ENCODE measurements at regions of chr2 and their contacts with region 1.

Region 1: GRCh38 chr2:43995733-43996533 is at the start of gene LRPPRC:
- DNase-seq: peak; percentile 96
- H3K4me3 Mint-ChIP-seq: peak within 1 kb of the TSS; percentile 96
- H3K27ac Mint-ChIP-seq: peak within 1 kb of the TSS; percentile 95
- H3K4me1 Mint-ChIP-seq: peaks cover 32% of the 10 kb centered on the region
- H3K27me3 Mint-ChIP-seq: peaks cover 5% of the 10 kb centered on the region
- total RNA-seq, gene LRPPRC: 173 and 179 TPM in 2 replicates

Region 2: DNA sequence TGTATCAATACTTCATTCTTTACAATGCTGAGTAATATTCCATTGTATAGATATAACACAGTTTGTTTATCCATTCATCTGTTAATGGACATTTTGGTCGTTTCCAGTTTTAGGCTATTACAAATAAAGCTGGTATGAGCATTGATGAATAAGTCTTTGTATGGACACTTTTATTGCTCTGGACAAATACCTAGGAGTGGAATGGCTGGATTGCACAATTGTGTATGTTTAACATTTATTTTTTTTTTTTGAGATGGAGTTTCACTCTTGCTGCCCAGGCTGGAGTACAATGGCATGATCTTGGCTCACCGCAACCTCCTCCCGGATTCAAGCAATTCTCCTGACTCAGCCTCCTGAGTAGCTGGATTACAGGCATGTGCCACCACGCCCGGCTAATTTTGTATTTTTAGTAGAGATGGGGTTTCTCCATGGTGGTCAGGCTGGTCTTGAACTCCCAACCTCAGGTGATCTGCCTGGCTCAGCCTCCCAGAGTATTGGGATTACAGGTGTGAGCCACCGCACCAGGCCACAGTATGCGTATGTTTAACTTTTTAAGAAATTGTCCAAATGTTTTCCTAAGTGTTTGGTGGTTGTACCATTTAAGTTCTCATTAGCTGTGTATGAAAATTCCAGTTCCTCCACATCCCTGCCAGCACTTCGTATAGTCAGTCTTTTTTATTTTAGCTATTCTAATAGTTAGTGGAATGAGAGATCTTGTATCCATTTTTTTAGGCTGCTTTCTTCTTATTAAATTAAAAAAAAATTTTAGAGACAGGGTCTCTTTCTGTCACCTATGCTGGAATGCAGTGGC is 1008.6 kb before region 1 on chr2:
- intact Hi-C with region 1: no loop called
- DNase-seq: no peak
- H3K4me3 Mint-ChIP-seq: no peak overlapping the region
- H3K27ac Mint-ChIP-seq: no peak overlapping the region
- H3K4me1 Mint-ChIP-seq: no peaks in the 10 kb centered on the region
- H3K27me3 Mint-ChIP-seq: peaks cover 5% of the 10 kb centered on the region

Region 3: GRCh38 chr2:43595603-43596412 is 400.1 kb before region 1 on chr2 and contains the start of gene THADA:
- intact Hi-C with region 1: loop called (anchors 5 kb)
- DNase-seq: peak; percentile 99
- H3K4me3 Mint-ChIP-seq: peak within 1 kb of the TSS; percentile 98
- H3K27ac Mint-ChIP-seq: peak within 1 kb of the TSS; percentile 99
- H3K4me1 Mint-ChIP-seq: peaks cover 28% of the 10 kb centered on the region
- H3K27me3 Mint-ChIP-seq: no peaks in the 10 kb centered on the region
- total RNA-seq, gene THADA: 41.6 and 55.4 TPM in 2 replicates

Region 4: GRCh38 chr2:44009135-44009735 is 13.3 kb after region 1 on chr2:
- intact Hi-C with region 1: no loop called
- DNase-seq: no peak
- H3K4me3 Mint-ChIP-seq: no peak overlapping the region
- H3K27ac Mint-ChIP-seq: no peak overlapping the region
- H3K4me1 Mint-ChIP-seq: peaks cover 9% of the 10 kb centered on the region
- H3K27me3 Mint-ChIP-seq: peaks cover 12% of the 10 kb centered on the region

Region 5: GRCh38 chr2:44361330-44362206 is 365.6 kb after region 1 on chr2 and contains the starts of genes CAMKMT and PREPL:
- intact Hi-C with region 1: loop called (anchors 1 kb)
- DNase-seq: peak; percentile 99
- H3K4me3 Mint-ChIP-seq: peak within 1 kb of the TSS; percentile 89
- H3K27ac Mint-ChIP-seq: peak within 1 kb of the TSS; percentile 100
- H3K4me1 Mint-ChIP-seq: peaks cover 31% of the 10 kb centered on the region
- H3K27me3 Mint-ChIP-seq: peaks cover 2% of the 10 kb centered on the region
- total RNA-seq, gene CAMKMT: 13.1 and 16.2 TPM in 2 replicates
- total RNA-seq, gene PREPL: 32.7 and 33.3 TPM in 2 replicates